ENCODE measurements at regions of chr4 and their contacts with region 1.

Region 1: GRCh38 chr4:683982-684622 is 4.8 kb downstream of the SLC49A3 start:
- DNase-seq: peak; percentile 89
- ATAC-seq: peak; percentile 61
- H3K4me3 Mint-ChIP-seq: no peak overlapping the region
- H3K27ac Mint-ChIP-seq: no peak overlapping the region
- H3K4me1 Mint-ChIP-seq: peaks cover 9% of the 10 kb centered on the region; the same call in 1 of the 2 replicates
- H3K27me3 Mint-ChIP-seq: no peaks in the 10 kb centered on the region; the same call in 1 of the 2 replicates
- CTCF ChIP-seq: peak; percentile 89

Region 2: DNA sequence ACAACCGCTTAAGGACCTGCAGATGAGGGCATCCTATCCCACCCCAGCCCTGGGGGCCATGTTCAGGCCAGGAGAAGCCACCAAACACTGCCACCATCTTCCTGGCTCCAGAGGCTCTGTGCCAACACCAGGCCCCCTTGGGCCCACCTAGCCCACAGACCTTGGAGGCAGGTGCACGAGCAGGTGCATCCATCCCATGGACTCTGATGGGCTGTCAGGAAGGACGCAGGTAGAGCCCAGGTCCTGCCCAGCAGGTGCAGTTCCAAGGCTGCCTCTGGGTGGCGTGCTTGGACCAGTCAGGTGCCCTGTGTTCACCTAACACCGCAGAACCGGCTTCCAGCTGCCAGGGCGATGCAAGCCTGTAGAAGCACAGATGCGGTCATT is 81.6 kb before region 1 on chr4:
- CTCF ChIA-PET with region 1: interaction called, 13 read pairs
- POLR2A ChIA-PET with region 1: interaction called, 4 read pairs
- DNase-seq: peak; percentile 99
- ATAC-seq: peak; percentile 99
- H3K4me3 Mint-ChIP-seq: no peak overlapping the region
- H3K27ac Mint-ChIP-seq: no peak overlapping the region
- H3K4me1 Mint-ChIP-seq: peaks cover 6% of the 10 kb centered on the region
- H3K27me3 Mint-ChIP-seq: peaks cover 4% of the 10 kb centered on the region
- CTCF ChIP-seq: peak; percentile 92

Region 3: DNA sequence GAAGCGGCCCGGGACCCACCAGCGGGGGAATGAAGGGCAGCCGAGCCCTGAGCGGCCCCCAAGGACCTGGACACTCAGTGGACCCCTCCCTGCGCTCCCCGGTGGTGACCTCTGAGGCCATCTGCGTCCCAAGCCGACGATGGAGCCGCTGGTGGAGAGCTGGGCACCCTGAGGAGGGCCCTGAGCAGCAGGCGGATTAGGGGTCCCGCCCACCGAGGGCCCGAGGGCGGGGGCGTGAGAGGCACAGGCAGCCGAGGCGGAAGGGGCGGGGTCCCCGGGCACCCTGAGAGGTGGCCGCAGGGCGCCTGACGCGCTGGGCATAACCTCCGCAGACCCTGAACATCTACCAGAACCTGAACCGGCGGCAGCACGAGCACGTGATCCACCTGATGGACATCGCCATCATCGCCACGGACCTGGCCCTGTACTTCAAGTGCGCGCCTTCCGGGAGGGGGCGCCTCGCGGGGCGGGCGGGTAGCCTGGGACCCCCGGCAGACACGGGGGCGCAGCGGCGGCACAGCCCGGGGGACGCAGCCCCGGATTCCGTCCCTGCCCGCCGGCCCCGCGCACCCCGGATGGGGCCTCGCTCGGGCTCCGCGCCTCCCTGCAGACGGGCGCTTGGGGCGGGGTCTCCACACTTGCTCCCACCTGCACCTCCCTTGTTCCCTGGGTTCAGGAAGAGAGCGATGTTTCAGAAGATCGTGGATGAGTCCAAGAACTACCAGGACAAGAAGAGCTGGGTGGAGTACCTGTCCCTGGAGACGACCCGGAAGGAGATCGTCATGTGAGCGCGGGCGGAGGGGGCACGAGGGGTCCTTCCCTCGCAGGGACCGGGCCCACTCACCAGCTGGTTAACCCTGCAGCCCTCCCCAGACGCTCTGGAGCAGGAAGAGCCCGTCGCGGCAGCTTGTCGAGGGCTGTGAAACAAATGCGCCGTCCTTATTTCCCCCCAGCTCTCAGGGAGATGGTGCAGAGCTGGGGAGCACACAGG is 20.4 kb before region 1 on chr4:
- CTCF ChIA-PET with region 1: interaction called, 17 read pairs
- POLR2A ChIA-PET with region 1: interaction called, 4 read pairs
- DNase-seq: peak; percentile 71
- ATAC-seq: peak; percentile 68
- H3K4me3 Mint-ChIP-seq: peak overlapping the region; percentile 70
- H3K27ac Mint-ChIP-seq: no peak overlapping the region
- H3K4me1 Mint-ChIP-seq: peaks cover 3% of the 10 kb centered on the region
- H3K27me3 Mint-ChIP-seq: no peaks in the 10 kb centered on the region; the same call in 1 of the 2 replicates
- CTCF ChIP-seq: no peak

Region 4: GRCh38 chr4:721261-722168 is 37.4 kb after region 1 on chr4:
- CTCF ChIA-PET with region 1: interaction called, 17 read pairs
- POLR2A ChIA-PET with region 1: no interaction called
- DNase-seq: no peak
- ATAC-seq: no peak
- H3K4me3 Mint-ChIP-seq: no peak overlapping the region
- H3K27ac Mint-ChIP-seq: peak overlapping the region; percentile 60
- H3K4me1 Mint-ChIP-seq: no peaks in the 10 kb centered on the region
- H3K27me3 Mint-ChIP-seq: no peaks in the 10 kb centered on the region
- CTCF ChIP-seq: no peak

Region 5: GRCh38 chr4:781493-782216 is 97.6 kb after region 1 on chr4:
- CTCF ChIA-PET with region 1: interaction called, 11 read pairs
- POLR2A ChIA-PET with region 1: no interaction called
- DNase-seq: peak; percentile 99
- ATAC-seq: peak; percentile 92
- H3K4me3 Mint-ChIP-seq: peak overlapping the region; percentile 77
- H3K27ac Mint-ChIP-seq: no peak overlapping the region
- H3K4me1 Mint-ChIP-seq: peaks cover 36% of the 10 kb centered on the region
- H3K27me3 Mint-ChIP-seq: peaks cover 39% of the 10 kb centered on the region
- CTCF ChIP-seq: no peak